Dendritic cell treated with granulocyte-macrophage colony-stimulating factor and Interleukin-4, amounts not matched to agents 40 ng/mL and 50 ng/mL, for 4 days (primary cell): ENCODE measurements at regions of chr19 and their contacts with region 1.

Region 1: DNA sequence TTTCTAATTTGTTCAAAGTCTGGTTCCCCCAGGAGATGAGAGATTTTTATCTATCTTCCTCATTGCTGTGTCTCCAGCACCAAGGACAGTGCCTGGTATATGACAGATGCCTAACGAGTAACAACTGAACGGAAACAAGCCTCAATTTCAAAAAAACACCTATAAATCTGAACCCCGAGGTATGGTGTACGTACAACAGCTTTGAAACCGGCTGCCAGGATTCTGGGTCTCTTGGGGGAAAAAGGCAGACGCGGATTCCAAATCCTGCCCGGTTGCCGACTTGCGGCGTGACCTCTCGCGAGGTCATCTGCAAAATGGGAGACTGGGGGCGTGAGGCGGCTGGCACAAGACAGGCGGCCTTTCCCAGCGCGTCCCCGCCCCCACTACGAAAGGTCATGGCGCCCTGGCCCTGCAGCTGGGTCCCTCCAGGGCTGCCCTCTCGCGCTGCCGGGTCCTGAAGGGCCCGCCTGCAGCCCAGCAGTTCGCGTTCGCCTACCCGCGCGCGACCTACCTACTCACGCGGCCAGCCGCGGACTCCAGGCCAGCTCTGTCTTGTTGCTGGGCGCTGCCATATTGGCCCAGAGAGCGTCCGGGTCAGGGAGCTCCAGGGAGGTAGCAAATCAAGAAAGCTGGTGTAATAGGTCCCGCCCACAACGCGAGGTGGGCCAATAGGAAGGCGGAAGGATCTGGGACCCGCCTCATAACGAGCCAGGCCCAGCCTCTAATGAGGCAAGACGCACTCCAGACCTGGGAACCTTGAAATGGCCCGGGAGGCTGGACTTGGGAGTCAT is at the start of gene ECSIT:
- H3K4me3 Mint-ChIP-seq: peak within 1 kb of the TSS; percentile 97
- H3K27ac Mint-ChIP-seq: peak within 1 kb of the TSS; percentile 96
- H3K4me1 Mint-ChIP-seq: peaks cover 16% of the 10 kb centered on the region
- H3K27me3 Mint-ChIP-seq: no peaks in the 10 kb centered on the region

Region 2: GRCh38 chr19:11482384-11483050 is 46.2 kb before region 1 on chr19:
- intact Hi-C with region 1: loop called (anchors 1 kb)
- H3K4me3 Mint-ChIP-seq: peak overlapping the region; percentile 81
- H3K27ac Mint-ChIP-seq: peak overlapping the region; percentile 86
- H3K4me1 Mint-ChIP-seq: peaks cover 36% of the 10 kb centered on the region
- H3K27me3 Mint-ChIP-seq: peaks cover 48% of the 10 kb centered on the region

Region 3: GRCh38 chr19:11505032-11505503 is 23.7 kb before region 1 on chr19:
- intact Hi-C with region 1: loop called (anchors 2 kb)
- H3K4me3 Mint-ChIP-seq: peak overlapping the region; percentile 74
- H3K27ac Mint-ChIP-seq: peak overlapping the region; percentile 80
- H3K4me1 Mint-ChIP-seq: peaks cover 23% of the 10 kb centered on the region
- H3K27me3 Mint-ChIP-seq: no peaks in the 10 kb centered on the region